Endothelial cell of umbilical vein (primary cell): ENCODE measurements at regions of chr6 and their contacts with region 1.

Region 1: DNA sequence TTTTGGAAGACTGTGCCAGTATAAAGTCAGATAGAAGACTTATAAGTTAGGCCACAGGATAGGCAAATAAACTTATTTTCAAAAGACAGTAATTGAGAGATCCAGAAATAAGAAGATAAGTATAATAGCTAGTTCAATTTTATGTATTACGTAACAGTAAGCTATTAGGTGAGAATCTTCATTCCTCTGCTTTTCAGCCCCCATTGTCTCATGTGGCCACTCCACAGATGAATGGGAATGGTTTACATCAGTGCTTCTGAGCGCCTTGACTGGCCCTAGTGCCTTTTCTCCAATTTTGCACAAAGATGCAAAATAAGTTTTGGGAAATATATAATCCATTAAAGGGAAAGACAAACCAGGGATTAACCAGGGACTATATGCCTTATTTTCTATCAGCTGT is 550.5 kb downstream of the MMUT start:
- DNase-seq: no peak
- H3K4me3 ChIP-seq: no peak overlapping the region
- H3K27ac ChIP-seq: no peak overlapping the region
- H3K4me1 ChIP-seq: no peaks in the 10 kb centered on the region
- H3K27me3 ChIP-seq: no peaks in the 10 kb centered on the region
- CTCF ChIP-seq: no peak
- POLR2A ChIP-seq: no peak

Region 2: DNA sequence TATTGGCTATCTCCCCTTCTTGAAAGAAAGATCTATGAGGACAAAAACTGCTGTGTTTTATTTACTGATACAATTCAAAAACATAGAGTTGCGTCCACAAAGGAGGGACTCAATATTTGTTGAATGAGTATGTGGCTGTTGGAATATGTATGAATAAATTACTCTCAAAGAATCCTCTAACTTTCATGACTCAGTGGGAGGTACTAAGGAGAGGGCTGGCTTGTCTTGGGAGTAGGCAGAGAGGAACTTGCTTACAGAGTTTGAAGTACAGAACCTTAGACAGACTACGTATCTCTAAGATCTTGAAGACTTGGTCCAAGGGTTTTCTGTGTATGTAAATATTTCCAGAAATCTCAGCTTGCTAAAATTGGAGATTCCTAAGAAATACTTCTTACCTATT is 297.5 kb before region 1 on chr6:
- CTCF ChIA-PET with region 1: no interaction called
- POLR2A ChIA-PET with region 1: no interaction called
- dilution Hi-C with region 1: no loop called
- intact Hi-C with region 1: no loop called
- DNase-seq: no peak
- H3K4me3 ChIP-seq: no peak overlapping the region
- H3K27ac ChIP-seq: no peak overlapping the region
- H3K4me1 ChIP-seq: no peaks in the 10 kb centered on the region
- H3K27me3 ChIP-seq: no peaks in the 10 kb centered on the region
- CTCF ChIP-seq: no peak
- POLR2A ChIP-seq: no peak

Region 3: GRCh38 chr6:49929340-49929739 is 1016.8 kb after region 1 on chr6:
- CTCF ChIA-PET with region 1: no interaction called
- POLR2A ChIA-PET with region 1: no interaction called
- dilution Hi-C with region 1: no loop called
- intact Hi-C with region 1: loop called (anchors 5 kb)
- DNase-seq: no peak
- H3K4me3 ChIP-seq: no peak overlapping the region
- H3K27ac ChIP-seq: no peak overlapping the region
- H3K4me1 ChIP-seq: no peaks in the 10 kb centered on the region
- H3K27me3 ChIP-seq: no peaks in the 10 kb centered on the region
- CTCF ChIP-seq: no peak
- POLR2A ChIP-seq: no peak